Naive thymus-derived CD4-positive, alpha-beta T cell (primary cell): ENCODE measurements at regions of chr18 and their contacts with region 1.

Region 1: DNA sequence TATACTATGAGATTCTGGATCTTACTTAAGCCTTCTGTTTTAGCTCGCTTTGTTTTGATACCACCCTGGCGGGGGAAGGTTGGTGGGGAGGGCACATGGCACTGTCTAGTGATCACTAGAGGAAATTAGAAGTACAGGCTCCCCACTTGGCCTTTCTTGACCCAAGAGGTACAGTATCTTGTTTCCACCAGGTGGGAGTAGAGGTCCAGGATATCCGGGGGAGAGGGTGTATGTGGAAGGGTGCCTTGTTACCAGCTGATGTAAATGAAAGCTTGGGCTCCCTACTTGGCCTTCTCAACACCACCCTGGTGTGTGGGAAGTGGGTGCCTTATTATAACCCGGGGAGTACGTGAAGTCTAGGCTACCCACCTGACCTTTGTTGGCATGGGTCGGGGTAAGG is 7.5 kb downstream of the GALNT1 start:
- DNase-seq: peak in 7 of 9 donors; percentile 21 to 47 (median 35)
- ATAC-seq: peak; percentile 74
- H3K4me3 ChIP-seq: no peak overlapping the region
- H3K4me3 Mint-ChIP-seq: no peak overlapping the region
- H3K27ac ChIP-seq: no peak overlapping the region
- H3K27ac Mint-ChIP-seq: peak overlapping the region in 1 of 9 donors; percentile 68
- H3K4me1 ChIP-seq: no peaks in the 10 kb centered on the region
- H3K4me1 Mint-ChIP-seq: peaks cover 5 to 53% (median 28%) of the 10 kb centered on the region in 7 donors
- H3K27me3 ChIP-seq: no peaks in the 10 kb centered on the region
- H3K27me3 Mint-ChIP-seq: no peaks in the 10 kb centered on the region

Region 2: GRCh38 chr18:35231052-35231451 is 357.9 kb before region 1 on chr18:
- CTCF ChIA-PET with region 1: no interaction called
- POLR2A ChIA-PET with region 1: no interaction called
- intact Hi-C with region 1: no loop called
- DNase-seq: peak; percentile 49 to 80 (median 73)
- ATAC-seq: peak; percentile 97
- H3K4me3 ChIP-seq: no peak overlapping the region
- H3K4me3 Mint-ChIP-seq: peak overlapping the region in 9 of 10 donors; percentile 1 to 71 (median 53)
- H3K27ac ChIP-seq: no peak overlapping the region
- H3K27ac Mint-ChIP-seq: peak overlapping the region in 1 of 9 donors; percentile 37
- H3K4me1 ChIP-seq: no peaks in the 10 kb centered on the region
- H3K4me1 Mint-ChIP-seq: peaks cover 3 to 5% (median 4%) of the 10 kb centered on the region in 7 donors
- H3K27me3 ChIP-seq: no peaks in the 10 kb centered on the region
- H3K27me3 Mint-ChIP-seq: no peaks in the 10 kb centered on the region

Region 3: DNA sequence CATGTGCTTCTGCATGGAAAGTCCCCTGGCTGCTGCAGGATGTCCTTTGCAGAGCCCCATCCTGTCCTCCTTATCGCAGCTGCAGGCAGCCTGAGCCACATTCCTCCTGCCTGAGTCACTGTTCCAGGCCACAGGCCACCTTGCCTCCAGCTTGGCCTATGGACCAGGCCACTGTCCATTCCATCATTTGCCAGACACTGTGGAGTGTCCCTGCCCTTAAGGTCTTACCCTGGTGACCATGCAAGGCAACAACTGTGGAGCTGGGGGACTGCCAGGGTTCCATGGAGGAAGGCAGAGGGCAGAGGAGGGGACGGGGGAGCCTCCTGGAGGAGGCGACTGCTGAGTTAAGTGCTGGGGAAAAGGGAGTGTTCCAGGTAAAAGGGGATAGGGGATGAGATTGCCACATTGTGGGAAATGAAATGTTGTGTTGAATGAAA is 130.0 kb before region 1 on chr18:
- CTCF ChIA-PET with region 1: no interaction called
- POLR2A ChIA-PET with region 1: no interaction called
- intact Hi-C with region 1: no loop called
- DNase-seq: no peak
- ATAC-seq: no peak
- H3K4me3 ChIP-seq: no peak overlapping the region
- H3K4me3 Mint-ChIP-seq: no peak overlapping the region
- H3K27ac ChIP-seq: no peak overlapping the region
- H3K27ac Mint-ChIP-seq: no peak overlapping the region
- H3K4me1 ChIP-seq: no peaks in the 10 kb centered on the region
- H3K4me1 Mint-ChIP-seq: peaks cover 0 to 12% (median 0%) of the 10 kb centered on the region in 7 donors
- H3K27me3 ChIP-seq: no peaks in the 10 kb centered on the region
- H3K27me3 Mint-ChIP-seq: no peaks in the 10 kb centered on the region

Region 4: DNA sequence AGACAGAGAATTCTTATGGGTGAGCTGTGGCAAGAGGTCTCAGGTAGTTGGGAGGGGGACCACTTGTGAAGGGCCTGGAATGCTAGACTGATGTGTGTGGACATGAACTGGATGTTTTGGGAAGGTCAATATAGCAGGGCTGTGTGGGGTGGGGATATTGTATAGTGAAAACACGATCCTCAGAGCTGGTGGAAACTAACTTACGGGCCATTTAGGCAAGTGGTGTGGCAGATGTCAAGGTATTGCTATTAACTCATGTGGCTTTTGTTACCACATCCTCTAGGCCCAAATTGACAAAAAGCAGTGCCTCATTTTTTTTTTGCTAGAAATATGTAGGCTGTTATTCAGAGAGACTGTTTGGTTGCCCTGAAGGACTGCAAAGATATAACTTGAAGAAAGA is 15.5 kb before region 1 on chr18:
- CTCF ChIA-PET with region 1: interaction called, 3 read pairs
- POLR2A ChIA-PET with region 1: no interaction called
- intact Hi-C with region 1: loop called in 1 of 2 experiments (anchors 2 kb)
- DNase-seq: peak in 2 of 9 donors; percentile 12 to 16
- ATAC-seq: peak; percentile 38
- H3K4me3 ChIP-seq: no peak overlapping the region
- H3K4me3 Mint-ChIP-seq: no peak overlapping the region
- H3K27ac ChIP-seq: no peak overlapping the region
- H3K27ac Mint-ChIP-seq: peak overlapping the region in 4 of 9 donors; percentile 1 to 69 (median 1)
- H3K4me1 ChIP-seq: no peaks in the 10 kb centered on the region
- H3K4me1 Mint-ChIP-seq: peaks cover 8 to 20% (median 12%) of the 10 kb centered on the region in 7 donors
- H3K27me3 ChIP-seq: no peaks in the 10 kb centered on the region
- H3K27me3 Mint-ChIP-seq: peaks cover 0 to 17% (median 8%) of the 10 kb centered on the region in 5 donors

Region 5: GRCh38 chr18:35635170-35635569 is 46.2 kb after region 1 on chr18:
- CTCF ChIA-PET with region 1: no interaction called
- POLR2A ChIA-PET with region 1: no interaction called
- intact Hi-C with region 1: no loop called
- DNase-seq: no peak
- ATAC-seq: no peak
- H3K4me3 ChIP-seq: no peak overlapping the region
- H3K4me3 Mint-ChIP-seq: no peak overlapping the region
- H3K27ac ChIP-seq: no peak overlapping the region
- H3K27ac Mint-ChIP-seq: no peak overlapping the region
- H3K4me1 ChIP-seq: no peaks in the 10 kb centered on the region
- H3K4me1 Mint-ChIP-seq: peaks cover 0 to 5% (median 0%) of the 10 kb centered on the region in 7 donors
- H3K27me3 ChIP-seq: no peaks in the 10 kb centered on the region
- H3K27me3 Mint-ChIP-seq: no peaks in the 10 kb centered on the region

Region 6: DNA sequence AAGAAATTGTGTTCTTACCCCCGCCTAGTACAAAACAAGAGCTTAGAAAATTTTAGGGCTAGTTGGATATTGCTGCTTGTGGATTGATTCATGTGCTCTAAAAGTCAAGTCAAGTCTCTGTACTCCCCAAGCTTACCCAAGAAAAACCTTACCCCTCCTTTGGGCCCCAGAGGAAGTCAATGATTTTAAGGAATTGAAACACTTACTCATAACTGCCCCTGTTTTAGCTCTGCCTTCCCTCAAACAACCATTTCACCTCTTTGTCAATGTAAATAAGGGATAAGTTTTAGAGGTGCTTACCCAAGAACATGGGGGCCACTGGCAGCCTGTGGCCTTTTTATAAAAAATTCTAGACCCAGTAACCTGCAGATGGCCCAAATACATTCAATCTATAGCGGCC is 246.8 kb after region 1 on chr18:
- CTCF ChIA-PET with region 1: no interaction called
- POLR2A ChIA-PET with region 1: no interaction called
- intact Hi-C with region 1: no loop called
- DNase-seq: no peak
- ATAC-seq: peak; percentile 79
- H3K4me3 ChIP-seq: no peak overlapping the region
- H3K4me3 Mint-ChIP-seq: no peak overlapping the region
- H3K27ac ChIP-seq: no peak overlapping the region
- H3K27ac Mint-ChIP-seq: no peak overlapping the region
- H3K4me1 ChIP-seq: no peaks in the 10 kb centered on the region
- H3K4me1 Mint-ChIP-seq: no peaks in the 10 kb centered on the region
- H3K27me3 ChIP-seq: no peaks in the 10 kb centered on the region
- H3K27me3 Mint-ChIP-seq: peaks cover 0 to 31% (median 20%) of the 10 kb centered on the region in 5 donors

Region 7: DNA sequence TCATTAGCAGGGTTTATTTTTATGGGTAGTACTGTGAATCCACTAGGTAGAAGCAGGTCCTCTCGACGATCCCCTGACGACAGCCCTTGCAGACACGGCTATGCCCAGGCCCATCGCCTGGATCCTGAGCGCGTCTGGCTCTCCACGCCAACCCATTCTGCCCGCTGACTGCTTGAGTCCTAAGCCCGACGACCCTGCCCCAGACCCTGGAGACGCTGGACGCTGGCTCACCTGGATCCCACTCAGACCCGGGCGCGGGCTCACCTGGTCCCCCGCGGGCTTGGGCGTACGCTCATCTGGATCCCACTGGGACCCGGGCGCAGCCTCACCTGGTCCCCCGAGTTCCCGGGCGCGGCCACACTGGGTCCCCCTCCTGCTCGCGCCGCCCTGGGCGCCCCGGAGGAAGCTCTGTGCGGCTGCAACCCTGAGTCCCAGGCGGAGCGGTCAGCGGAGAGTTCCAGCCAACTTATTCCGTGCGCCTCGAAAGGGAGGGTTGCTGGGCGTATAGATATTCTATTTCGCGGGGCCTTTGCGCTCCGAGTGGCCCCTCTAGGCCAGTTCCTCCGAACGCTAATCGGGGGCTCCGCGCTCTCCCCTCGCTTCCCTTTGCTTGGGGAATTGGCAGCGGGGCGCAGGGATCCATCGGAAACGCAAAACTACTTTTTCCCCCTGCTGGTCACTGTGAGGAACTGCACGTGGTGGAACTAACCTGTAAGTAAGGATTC is 361.1 kb after region 1 on chr18:
- CTCF ChIA-PET with region 1: no interaction called
- POLR2A ChIA-PET with region 1: no interaction called
- intact Hi-C with region 1: loop called in 1 of 2 experiments (anchors 1 kb)
- DNase-seq: peak; percentile 36 to 68 (median 57)
- ATAC-seq: peak; percentile 89
- H3K4me3 ChIP-seq: peak overlapping the region; percentile 70
- H3K4me3 Mint-ChIP-seq: peak overlapping the region; percentile 78 to 93 (median 88)
- H3K27ac ChIP-seq: no peak overlapping the region
- H3K27ac Mint-ChIP-seq: peak overlapping the region in 4 of 9 donors; percentile 21 to 59 (median 28)
- H3K4me1 ChIP-seq: peaks cover 4 to 8% of the 10 kb centered on the region in 2 donors
- H3K4me1 Mint-ChIP-seq: peaks cover 0 to 9% (median 4%) of the 10 kb centered on the region in 7 donors
- H3K27me3 ChIP-seq: peaks cover 0 to 4% of the 10 kb centered on the region in 2 donors
- H3K27me3 Mint-ChIP-seq: peaks cover 14 to 33% (median 24%) of the 10 kb centered on the region in 5 donors